HCT116 (cell line): ENCODE measurements at regions of chr19 and their contacts with region 1.

Region 1: GRCh38 chr19:13150187-13150930 is at the starts of genes IER2 and STX10:
- DNase-seq: no peak
- ATAC-seq: peak; percentile 41
- H3K4me3 ChIP-seq: peak within 1 kb of the TSS; percentile 84 to 98
- H3K27ac ChIP-seq: peak within 1 kb of the TSS; percentile 94
- H3K4me1 ChIP-seq: peaks cover 33 to 66% of the 10 kb centered on the region in 2 experiments
- H3K27me3 ChIP-seq: no peaks in the 10 kb centered on the region
- CTCF ChIP-seq: peak in 2 of 3 experiments; percentile 46 to 58; a peak in 4 of 6 replicates
- POLR2A ChIP-seq: peak; percentile 23
- RAD21 ChIP-seq: no peak
- total RNA-seq, gene IER2: 247 TPM
- total RNA-seq, gene STX10: 149 TPM

Region 2: DNA sequence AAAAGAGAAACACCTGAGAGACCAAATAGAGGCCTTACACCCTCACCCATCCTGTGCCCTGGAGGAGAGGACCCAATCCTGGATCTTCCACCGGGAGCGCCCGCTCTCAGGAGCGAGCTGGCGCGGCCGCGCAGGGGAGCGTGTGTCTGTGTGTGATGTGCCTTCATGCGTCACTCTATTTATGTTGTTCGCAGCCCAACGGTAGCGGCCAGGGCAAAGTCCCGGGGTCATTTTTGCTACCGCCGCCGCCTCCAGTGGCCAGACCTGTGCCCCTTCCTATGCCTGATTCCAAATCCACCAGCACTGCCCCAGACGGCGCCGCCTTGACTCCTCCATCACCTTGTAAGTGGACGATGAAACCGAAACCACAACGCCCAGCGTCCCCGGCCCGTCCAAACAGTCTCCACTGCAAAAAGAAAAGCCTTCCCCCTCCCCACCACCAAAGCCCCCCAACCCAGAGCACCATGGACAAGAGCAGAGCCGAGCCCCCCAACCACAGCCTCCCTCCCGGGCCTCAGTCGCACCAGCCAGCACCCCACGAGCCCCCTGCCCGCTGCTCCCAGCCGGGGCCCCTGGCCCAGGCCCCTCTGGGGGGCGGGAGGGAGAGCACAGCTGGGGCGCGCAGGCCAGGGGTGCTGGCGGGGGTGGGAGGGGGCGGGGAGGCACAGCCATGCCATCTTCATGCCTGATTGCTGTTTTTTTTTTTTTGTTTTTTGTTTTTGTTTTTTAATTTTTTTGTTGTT is 62.4 kb before region 1 on chr19:
- CTCF ChIA-PET with region 1: no interaction called
- POLR2A ChIA-PET with region 1: no interaction called
- RAD21 ChIA-PET with region 1: no interaction called
- intact Hi-C with region 1: no loop called
- DNase-seq: no peak
- ATAC-seq: no peak
- H3K4me3 ChIP-seq: no peak overlapping the region
- H3K27ac ChIP-seq: no peak overlapping the region
- H3K4me1 ChIP-seq: no peaks in the 10 kb centered on the region
- H3K27me3 ChIP-seq: no peaks in the 10 kb centered on the region
- CTCF ChIP-seq: no peak
- POLR2A ChIP-seq: no peak
- RAD21 ChIP-seq: no peak

Region 3: GRCh38 chr19:13117772-13118423 is 32.5 kb before region 1 on chr19 and contains the start of gene NACC1:
- CTCF ChIA-PET with region 1: interaction called, 4 read pairs
- POLR2A ChIA-PET with region 1: interaction called, 16 read pairs
- RAD21 ChIA-PET with region 1: interaction called in 1 of 2 experiments, 6 read pairs
- intact Hi-C with region 1: loop called (anchors 2 kb)
- DNase-seq: peak; percentile 89
- ATAC-seq: peak; percentile 87
- H3K4me3 ChIP-seq: peak within 1 kb of the TSS; percentile 97 to 98
- H3K27ac ChIP-seq: peak within 1 kb of the TSS; percentile 100
- H3K4me1 ChIP-seq: peaks cover 21 to 43% of the 10 kb centered on the region in 2 experiments; a peak in 3 of 4 replicates
- H3K27me3 ChIP-seq: no peaks in the 10 kb centered on the region
- CTCF ChIP-seq: no peak
- POLR2A ChIP-seq: no peak
- RAD21 ChIP-seq: no peak
- total RNA-seq, gene NACC1: 181 TPM

Region 4: GRCh38 chr19:13162518-13163314 is 12.4 kb after region 1 on chr19:
- CTCF ChIA-PET with region 1: interaction called, 4 read pairs
- POLR2A ChIA-PET with region 1: interaction called, 63 read pairs
- RAD21 ChIA-PET with region 1: no interaction called
- intact Hi-C with region 1: no loop called
- DNase-seq: peak; percentile 99
- ATAC-seq: peak; percentile 77
- H3K4me3 ChIP-seq: peak overlapping the region; percentile 48 to 54
- H3K27ac ChIP-seq: peak overlapping the region; percentile 99
- H3K4me1 ChIP-seq: peaks cover 69 to 88% of the 10 kb centered on the region in 2 experiments
- H3K27me3 ChIP-seq: no peaks in the 10 kb centered on the region
- CTCF ChIP-seq: no peak
- POLR2A ChIP-seq: peak; percentile 42
- RAD21 ChIP-seq: no peak

Region 5: DNA sequence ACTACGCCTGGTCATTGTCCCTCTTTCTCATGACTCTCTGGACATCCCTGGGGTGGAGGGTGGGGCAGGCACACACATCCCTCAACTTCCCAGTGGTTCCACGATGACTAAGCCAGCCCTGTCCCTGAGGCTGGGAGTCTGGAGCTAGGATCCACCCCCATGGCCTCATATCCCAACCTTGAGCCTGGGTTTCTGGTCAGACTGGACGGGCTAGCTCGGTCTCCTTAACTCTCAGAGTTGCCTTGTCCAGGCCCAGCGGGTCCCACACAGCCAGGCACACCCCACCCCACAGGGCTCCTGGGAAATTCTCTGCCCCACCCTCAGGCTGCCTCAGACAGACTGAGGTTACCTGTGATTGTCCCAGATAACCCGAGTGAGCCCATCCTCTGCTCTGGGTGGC is 19.5 kb after region 1 on chr19:
- CTCF ChIA-PET with region 1: interaction called, 4 read pairs
- POLR2A ChIA-PET with region 1: interaction called, 63 read pairs
- RAD21 ChIA-PET with region 1: no interaction called
- intact Hi-C with region 1: no loop called
- DNase-seq: peak; percentile 91
- ATAC-seq: peak; percentile 68
- H3K4me3 ChIP-seq: peak overlapping the region; percentile 11 to 27; a peak in 2 of 4 replicates
- H3K27ac ChIP-seq: peak overlapping the region; percentile 99
- H3K4me1 ChIP-seq: peaks cover 85 to 91% of the 10 kb centered on the region in 2 experiments
- H3K27me3 ChIP-seq: no peaks in the 10 kb centered on the region
- CTCF ChIP-seq: no peak
- POLR2A ChIP-seq: no peak
- RAD21 ChIP-seq: no peak

Region 6: GRCh38 chr19:13262450-13262849 is 112.1 kb after region 1 on chr19:
- CTCF ChIA-PET with region 1: interaction called, 5 read pairs
- POLR2A ChIA-PET with region 1: interaction called, 4 read pairs
- RAD21 ChIA-PET with region 1: interaction called in 1 of 2 experiments, 3 read pairs
- intact Hi-C with region 1: loop called (anchors 5 kb)
- DNase-seq: no peak
- ATAC-seq: peak; percentile 55
- H3K4me3 ChIP-seq: no peak overlapping the region
- H3K27ac ChIP-seq: no peak overlapping the region
- H3K4me1 ChIP-seq: peaks cover 24 to 35% of the 10 kb centered on the region in 2 experiments
- H3K27me3 ChIP-seq: no peaks in the 10 kb centered on the region
- CTCF ChIP-seq: peak; percentile 27 to 76 (median 64); a peak in 5 of 6 replicates
- POLR2A ChIP-seq: no peak
- RAD21 ChIP-seq: peak; percentile 79

Region 7: GRCh38 chr19:13561461-13561860 is 411.1 kb after region 1 on chr19:
- CTCF ChIA-PET with region 1: no interaction called
- POLR2A ChIA-PET with region 1: no interaction called
- RAD21 ChIA-PET with region 1: no interaction called
- intact Hi-C with region 1: no loop called
- DNase-seq: no peak
- ATAC-seq: no peak
- H3K4me3 ChIP-seq: no peak overlapping the region
- H3K27ac ChIP-seq: no peak overlapping the region
- H3K4me1 ChIP-seq: peaks cover 0 to 3% of the 10 kb centered on the region in 2 experiments; a peak in 1 of 4 replicates
- H3K27me3 ChIP-seq: no peaks in the 10 kb centered on the region
- CTCF ChIP-seq: no peak
- POLR2A ChIP-seq: no peak
- RAD21 ChIP-seq: no peak

Region 8: GRCh38 chr19:13846557-13847406 is 696.4 kb after region 1 on chr19:
- CTCF ChIA-PET with region 1: no interaction called
- POLR2A ChIA-PET with region 1: no interaction called
- RAD21 ChIA-PET with region 1: no interaction called
- intact Hi-C with region 1: loop called (anchors 5 kb)
- DNase-seq: peak; percentile 90
- ATAC-seq: peak; percentile 36
- H3K4me3 ChIP-seq: peak overlapping the region; percentile 48 to 61
- H3K27ac ChIP-seq: peak overlapping the region; percentile 96
- H3K4me1 ChIP-seq: peaks cover 68 to 89% of the 10 kb centered on the region in 2 experiments
- H3K27me3 ChIP-seq: no peaks in the 10 kb centered on the region
- CTCF ChIP-seq: no peak
- POLR2A ChIP-seq: no peak
- RAD21 ChIP-seq: no peak